KBM-7 (cell line): ENCODE measurements at regions of chr16 and their contacts with region 1.

Region 1: GRCh38 chr16:19366391-19366790 is 51.3 kb upstream of the TMC5 start:
- DNase-seq: no peak

Region 2: DNA sequence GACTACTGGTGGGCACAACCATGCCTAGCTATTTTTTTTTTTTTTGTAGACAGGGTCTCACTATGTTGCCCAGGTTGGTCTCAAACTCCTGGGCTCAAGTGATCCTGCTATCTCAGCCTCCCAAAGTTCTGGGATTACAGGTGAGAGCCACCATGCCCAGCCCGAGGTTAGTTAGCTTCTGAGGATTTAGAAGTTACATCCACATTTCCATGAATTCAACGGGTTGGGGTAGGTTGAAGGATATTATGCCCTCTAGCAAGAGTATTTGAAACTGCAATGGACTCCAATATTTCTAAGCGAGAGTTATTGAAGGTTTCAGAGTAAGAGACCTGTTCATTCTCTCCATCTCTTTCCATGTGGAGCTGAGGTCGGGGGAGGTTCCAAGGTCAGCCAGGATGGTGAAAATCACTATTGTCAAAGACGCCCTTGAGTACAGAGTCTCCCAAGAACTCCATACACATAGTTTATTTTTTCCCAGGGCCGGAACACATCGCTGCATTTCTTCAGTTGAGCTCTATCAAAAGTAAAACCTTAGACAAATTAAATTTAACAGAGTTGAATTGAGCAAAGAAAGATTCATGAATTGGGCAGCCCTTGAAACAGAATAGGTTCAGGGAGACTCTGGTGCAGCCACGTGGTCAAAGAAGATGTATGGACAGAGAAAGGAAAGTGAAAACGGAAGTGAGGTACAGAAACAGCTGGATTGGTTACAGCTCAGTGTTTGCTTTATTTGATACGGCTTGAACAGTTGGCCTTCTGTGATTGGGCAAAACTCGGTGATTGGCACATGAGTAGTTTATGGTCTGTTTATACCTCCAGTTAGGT is 271.6 kb before region 1 on chr16:
- in situ Hi-C with region 1: loop called (anchors 10 kb)
- DNase-seq: peak; percentile 46

Region 3: DNA sequence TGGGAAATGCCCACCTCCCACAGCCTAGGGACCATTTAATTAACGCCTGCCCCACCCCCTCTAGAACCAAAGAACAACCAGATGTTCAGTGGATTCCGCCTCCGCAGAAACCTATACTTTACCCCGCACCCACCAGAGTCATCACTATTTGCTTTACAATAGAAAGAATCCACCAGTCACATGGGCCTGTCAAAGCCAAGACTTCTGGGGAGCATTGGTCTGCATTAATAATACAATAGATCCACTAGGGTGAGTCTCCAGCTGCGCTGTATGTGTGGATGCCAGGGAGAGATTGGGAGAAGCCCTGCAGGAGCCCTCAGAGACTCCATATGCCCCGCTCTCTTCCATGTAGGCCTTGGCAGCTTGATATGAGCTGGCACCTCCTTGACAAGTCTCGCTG is 49.5 kb before region 1 on chr16:
- in situ Hi-C with region 1: no loop called
- DNase-seq: no peak